CD8-positive, alpha-beta memory T cell (primary cell): ENCODE measurements at regions of chr7 and their contacts with region 1.

Region 1: GRCh38 chr7:129376076-129376777 is 58.0 kb upstream of the STRIP2 start:
- DNase-seq: peak in 4 of 5 donors; percentile 9 to 56 (median 16)
- H3K4me3 ChIP-seq: no peak overlapping the region
- H3K4me3 Mint-ChIP-seq: no peak overlapping the region
- H3K27ac ChIP-seq: no peak overlapping the region
- H3K27ac Mint-ChIP-seq: no peak overlapping the region
- H3K4me1 ChIP-seq: no peaks in the 10 kb centered on the region
- H3K4me1 Mint-ChIP-seq: peaks cover 7 to 13% (median 13%) of the 10 kb centered on the region in 3 donors
- H3K27me3 ChIP-seq: no peaks in the 10 kb centered on the region
- H3K27me3 Mint-ChIP-seq: no peaks in the 10 kb centered on the region

Region 2: GRCh38 chr7:129388333-129389098 is 12.3 kb after region 1 on chr7:
- CTCF ChIA-PET with region 1: interaction called, 13 read pairs
- POLR2A ChIA-PET with region 1: no interaction called
- DNase-seq: no peak
- H3K4me3 ChIP-seq: no peak overlapping the region
- H3K4me3 Mint-ChIP-seq: no peak overlapping the region
- H3K27ac ChIP-seq: no peak overlapping the region
- H3K27ac Mint-ChIP-seq: no peak overlapping the region
- H3K4me1 ChIP-seq: no peaks in the 10 kb centered on the region
- H3K4me1 Mint-ChIP-seq: no peaks in the 10 kb centered on the region
- H3K27me3 ChIP-seq: no peaks in the 10 kb centered on the region
- H3K27me3 Mint-ChIP-seq: no peaks in the 10 kb centered on the region

Region 3: GRCh38 chr7:129405527-129405926 is 29.3 kb after region 1 on chr7:
- CTCF ChIA-PET with region 1: no interaction called
- POLR2A ChIA-PET with region 1: no interaction called
- DNase-seq: no peak
- H3K4me3 ChIP-seq: no peak overlapping the region
- H3K4me3 Mint-ChIP-seq: no peak overlapping the region
- H3K27ac ChIP-seq: no peak overlapping the region
- H3K27ac Mint-ChIP-seq: no peak overlapping the region
- H3K4me1 ChIP-seq: no peaks in the 10 kb centered on the region
- H3K4me1 Mint-ChIP-seq: no peaks in the 10 kb centered on the region
- H3K27me3 ChIP-seq: no peaks in the 10 kb centered on the region
- H3K27me3 Mint-ChIP-seq: no peaks in the 10 kb centered on the region